Body of pancreas (tissue), 4 donors: ENCODE measurements at regions of chr22 and their contacts with region 1.

Region 1: DNA sequence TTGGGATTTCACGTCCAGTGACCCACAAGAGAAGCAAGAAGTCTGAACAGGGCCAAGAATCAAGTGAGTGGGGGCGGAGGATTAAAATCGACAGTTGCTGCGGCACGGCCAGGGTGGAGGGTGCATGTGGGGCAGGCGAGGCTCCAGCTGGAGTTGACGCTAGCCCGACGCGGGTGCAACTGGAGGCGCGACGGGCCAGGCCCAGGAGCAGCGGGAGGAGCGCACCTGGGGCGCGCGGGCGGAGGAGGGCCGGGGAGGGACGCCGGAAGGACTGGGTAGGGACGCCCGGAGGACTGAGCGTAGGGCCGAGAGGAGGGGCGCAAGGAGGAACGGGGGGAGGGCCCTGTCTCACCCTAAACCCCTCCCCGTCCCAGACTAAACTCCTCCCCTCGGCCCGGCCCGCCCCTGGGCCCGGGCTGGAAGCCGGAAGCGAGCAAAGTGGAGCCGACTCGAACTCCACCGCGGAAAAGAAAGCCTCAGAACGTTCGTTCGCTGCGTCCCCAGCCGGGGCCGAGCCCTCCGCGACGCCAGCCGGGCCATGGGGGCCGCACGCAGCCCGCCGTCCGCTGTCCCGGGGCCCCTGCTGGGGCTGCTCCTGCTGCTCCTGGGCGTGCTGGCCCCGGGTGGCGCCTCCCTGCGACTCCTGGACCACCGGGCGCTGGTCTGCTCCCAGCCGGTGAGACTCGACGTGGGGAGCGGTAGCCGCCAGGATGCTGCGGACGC is at the start of gene IL17RA:
- DNase-seq: peak; percentile 93 to 94 (median 94)
- ATAC-seq: peak; percentile 99
- H3K4me3 ChIP-seq: peak within 1 kb of the TSS; percentile 74 to 88
- H3K27ac ChIP-seq: peak within 1 kb of the TSS; percentile 48 to 95 (median 80)
- H3K4me1 ChIP-seq: peaks cover 26% of the 10 kb centered on the region
- H3K27me3 ChIP-seq: no peaks in the 10 kb centered on the region
- CTCF ChIP-seq: no peak
- POLR2A ChIP-seq: peak; percentile 67 to 80 (median 77)
- total RNA-seq, gene IL17RA: 8.3 to 13.8 TPM

Region 2: GRCh38 chr22:17164392-17165024 is 79.8 kb after region 1 on chr22:
- intact Hi-C with region 1: loop called (anchors 5 kb)
- DNase-seq: no peak
- ATAC-seq: no peak
- H3K4me3 ChIP-seq: no peak overlapping the region
- H3K27ac ChIP-seq: no peak overlapping the region
- H3K4me1 ChIP-seq: peaks cover 14% of the 10 kb centered on the region
- H3K27me3 ChIP-seq: no peaks in the 10 kb centered on the region
- CTCF ChIP-seq: no peak
- POLR2A ChIP-seq: no peak